HCT116 (cell line): ENCODE measurements at regions of chr20 and their contacts with region 1.

Region 1: DNA sequence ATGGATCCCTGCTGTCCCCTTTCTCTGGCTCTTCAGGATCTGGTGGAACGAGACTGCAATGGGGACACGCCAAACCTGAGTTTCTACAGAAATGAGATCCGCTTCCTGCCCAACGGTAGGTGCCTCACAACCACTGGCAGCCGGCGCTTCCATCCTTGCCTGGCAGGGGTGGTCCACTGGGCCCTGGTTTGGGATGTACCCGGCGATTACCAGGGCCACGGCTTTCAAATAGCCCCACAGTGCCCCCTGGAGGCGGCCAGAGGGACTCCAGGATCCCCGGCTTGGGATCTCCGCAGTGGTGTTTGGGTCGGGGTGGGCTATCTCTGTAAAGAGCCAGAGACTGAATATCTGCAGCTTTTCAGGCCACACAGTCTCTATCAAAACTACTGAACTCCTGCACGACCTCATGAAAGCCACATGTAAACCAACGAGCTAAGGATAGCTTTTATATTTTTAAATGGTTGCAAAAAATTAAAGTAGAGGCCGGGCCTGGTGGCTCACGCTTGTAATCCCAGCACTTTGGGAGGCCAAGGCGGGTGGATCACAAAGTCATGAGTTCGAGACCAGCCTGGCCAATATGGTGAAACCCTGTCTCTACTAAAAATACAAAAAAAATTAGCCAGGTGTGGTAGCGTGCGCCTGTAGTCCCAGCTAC is 3.7 kb downstream of the OGFR start:
- DNase-seq: no peak
- ATAC-seq: peak; percentile 68
- H3K4me3 ChIP-seq: no peak overlapping the region
- H3K27ac ChIP-seq: peak overlapping the region; percentile 8; the same call in 1 of the 2 replicates
- H3K4me1 ChIP-seq: peaks cover 19 to 35% of the 10 kb centered on the region in 2 experiments; a peak in 3 of 4 replicates
- H3K27me3 ChIP-seq: no peaks in the 10 kb centered on the region
- CTCF ChIP-seq: peak in 2 of 3 experiments; percentile 88 to 94; a peak in 5 of 6 replicates
- POLR2A ChIP-seq: no peak
- RAD21 ChIP-seq: no peak; the same call in none of the 2 replicates

Region 2: GRCh38 chr20:62302341-62303058 is 505.8 kb before region 1 on chr20 and contains the start of gene ADRM1:
- CTCF ChIA-PET with region 1: no interaction called
- POLR2A ChIA-PET with region 1: no interaction called
- RAD21 ChIA-PET with region 1: no interaction called
- intact Hi-C with region 1: loop called (anchors 10 kb)
- DNase-seq: peak; percentile 88
- ATAC-seq: peak; percentile 78
- H3K4me3 ChIP-seq: peak within 1 kb of the TSS; percentile 95 to 99
- H3K27ac ChIP-seq: peak within 1 kb of the TSS; percentile 95
- H3K4me1 ChIP-seq: peaks cover 17 to 40% of the 10 kb centered on the region in 2 experiments
- H3K27me3 ChIP-seq: no peaks in the 10 kb centered on the region
- CTCF ChIP-seq: peak; percentile 77 to 95 (median 93)
- POLR2A ChIP-seq: peak; percentile 23
- RAD21 ChIP-seq: peak; percentile 66
- total RNA-seq, gene ADRM1: 158 TPM

Region 3: DNA sequence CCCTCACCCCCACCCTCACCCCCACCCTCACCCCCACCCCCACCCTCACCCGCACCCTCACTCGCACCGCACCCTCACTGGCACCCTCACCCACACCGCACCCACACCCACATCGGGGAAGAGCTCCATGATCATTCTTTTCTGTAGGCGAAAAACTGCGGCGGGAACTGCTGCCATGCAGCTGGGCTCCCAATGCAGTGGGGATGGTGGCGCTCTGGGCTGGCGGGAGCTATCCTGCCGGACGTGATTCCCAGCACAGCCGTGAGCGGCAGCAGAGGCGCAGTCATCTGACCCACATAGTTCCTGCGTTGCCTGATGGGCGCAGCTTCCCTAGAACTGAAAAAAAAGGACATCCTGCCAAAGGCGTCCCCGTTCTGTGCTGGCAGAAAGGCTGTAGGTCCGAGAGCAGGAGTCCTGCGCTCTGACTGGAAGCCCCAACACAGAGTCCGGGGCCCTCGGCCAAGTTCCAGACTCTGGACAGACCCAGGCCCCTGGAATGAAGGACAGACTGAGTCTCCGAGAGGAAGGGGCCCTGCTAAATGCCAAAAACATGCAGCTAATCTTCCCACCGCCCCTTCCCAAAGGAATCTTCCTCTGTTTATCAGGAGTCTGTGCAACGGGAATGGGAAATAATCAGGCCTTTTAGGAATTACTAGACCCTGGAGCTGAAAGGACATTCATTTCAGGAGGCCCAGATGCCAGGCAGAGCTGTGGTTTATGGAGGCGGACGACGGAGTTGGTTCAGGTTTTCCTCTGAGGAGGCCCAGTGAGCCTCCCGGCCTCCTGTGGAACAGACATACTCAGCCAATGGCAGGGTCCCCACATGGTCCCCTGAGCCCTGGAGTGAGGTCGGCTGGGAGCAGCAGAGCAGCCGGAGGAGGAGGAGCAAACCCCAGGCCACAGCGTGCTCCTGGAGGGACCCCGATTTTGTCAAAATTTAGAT is 67.4 kb after region 1 on chr20:
- CTCF ChIA-PET with region 1: no interaction called
- POLR2A ChIA-PET with region 1: no interaction called
- RAD21 ChIA-PET with region 1: no interaction called
- intact Hi-C with region 1: no loop called
- DNase-seq: peak; percentile 71
- ATAC-seq: peak; percentile 92
- H3K4me3 ChIP-seq: peak overlapping the region; percentile 18 to 30; a peak in 3 of 4 replicates
- H3K27ac ChIP-seq: peak overlapping the region; percentile 77
- H3K4me1 ChIP-seq: peaks cover 13 to 26% of the 10 kb centered on the region in 2 experiments
- H3K27me3 ChIP-seq: no peaks in the 10 kb centered on the region
- CTCF ChIP-seq: peak; percentile 54 to 59 (median 56); a peak in 5 of 6 replicates
- POLR2A ChIP-seq: no peak
- RAD21 ChIP-seq: peak; percentile 35; the same call in 1 of the 2 replicates